Breast epithelium (tissue), 4 donors: ENCODE measurements at regions of chr3 and their contacts with region 1.

Region 1: GRCh38 chr3:55588146-55588765 is 101.2 kb upstream of the WNT5A start:
- DNase-seq: no peak
- H3K4me3 ChIP-seq: no peak overlapping the region
- H3K27ac ChIP-seq: no peak overlapping the region
- H3K4me1 ChIP-seq: peaks cover 0 to 5% of the 10 kb centered on the region in 2 donors
- H3K27me3 ChIP-seq: no peaks in the 10 kb centered on the region
- CTCF ChIP-seq: no peak
- POLR2A ChIP-seq: no peak

Region 2: DNA sequence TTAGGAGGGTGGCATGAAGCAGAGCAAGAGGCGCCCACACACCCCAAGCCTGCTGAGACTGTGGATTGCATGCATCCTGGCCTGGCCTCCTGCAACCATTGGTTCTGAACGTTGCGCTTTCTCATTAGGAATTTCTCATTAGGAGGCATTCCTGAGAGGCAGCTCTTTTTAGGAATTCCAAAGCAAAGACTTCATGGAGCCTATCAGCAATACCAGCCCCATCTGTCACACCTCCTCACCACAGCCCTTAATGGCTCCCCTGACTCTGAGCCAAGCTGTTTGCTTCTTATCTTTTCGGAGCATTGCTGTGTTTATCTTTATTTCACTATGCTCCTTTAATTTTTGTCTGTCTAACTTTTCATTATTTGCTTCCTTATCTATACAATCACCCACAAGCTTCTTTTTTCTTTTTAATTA is 1239.0 kb before region 1 on chr3:
- intact Hi-C with region 1: loop called (anchors 10 kb)
- DNase-seq: no peak
- H3K4me3 ChIP-seq: no peak overlapping the region
- H3K27ac ChIP-seq: no peak overlapping the region
- H3K4me1 ChIP-seq: no peaks in the 10 kb centered on the region
- H3K27me3 ChIP-seq: no peaks in the 10 kb centered on the region
- CTCF ChIP-seq: no peak
- POLR2A ChIP-seq: no peak

Region 3: GRCh38 chr3:55243678-55244077 is 344.6 kb before region 1 on chr3:
- intact Hi-C with region 1: no loop called
- DNase-seq: no peak
- H3K4me3 ChIP-seq: no peak overlapping the region
- H3K27ac ChIP-seq: no peak overlapping the region
- H3K4me1 ChIP-seq: no peaks in the 10 kb centered on the region
- H3K27me3 ChIP-seq: no peaks in the 10 kb centered on the region
- CTCF ChIP-seq: no peak
- POLR2A ChIP-seq: no peak

Region 4: DNA sequence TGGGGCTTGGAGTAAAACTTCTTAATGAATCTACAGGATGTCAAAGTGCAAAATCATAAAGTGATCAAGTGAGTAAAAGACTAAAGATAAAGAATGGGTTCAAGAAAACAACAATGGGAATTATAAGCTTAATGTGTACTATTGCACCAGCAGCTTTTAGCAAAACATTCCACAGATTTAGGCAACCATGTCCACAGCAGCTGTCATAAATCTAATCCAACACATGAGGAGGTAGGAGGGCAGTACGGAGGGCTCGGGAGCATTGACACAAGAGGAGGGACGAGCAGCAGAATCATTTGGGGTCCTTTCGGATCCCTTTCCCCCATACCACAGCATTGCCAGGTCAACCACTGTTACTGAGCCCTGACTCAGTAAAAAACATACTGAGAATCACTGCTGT is 363.1 kb after region 1 on chr3:
- intact Hi-C with region 1: no loop called
- DNase-seq: no peak
- H3K4me3 ChIP-seq: no peak overlapping the region
- H3K27ac ChIP-seq: no peak overlapping the region
- H3K4me1 ChIP-seq: no peaks in the 10 kb centered on the region
- H3K27me3 ChIP-seq: no peaks in the 10 kb centered on the region
- CTCF ChIP-seq: no peak
- POLR2A ChIP-seq: no peak